ENCODE measurements at regions of chr17 and their contacts with region 1.

Region 1: GRCh38 chr17:77331301-77331864 is 190.6 kb downstream of the SEC14L1 start:
- DNase-seq: peak; percentile 90
- H3K4me3 Mint-ChIP-seq: peak overlapping the region; percentile 73
- H3K27ac Mint-ChIP-seq: peak overlapping the region; percentile 86
- H3K4me1 Mint-ChIP-seq: peaks cover 42% of the 10 kb centered on the region
- H3K27me3 Mint-ChIP-seq: peaks cover 2% of the 10 kb centered on the region

Region 2: DNA sequence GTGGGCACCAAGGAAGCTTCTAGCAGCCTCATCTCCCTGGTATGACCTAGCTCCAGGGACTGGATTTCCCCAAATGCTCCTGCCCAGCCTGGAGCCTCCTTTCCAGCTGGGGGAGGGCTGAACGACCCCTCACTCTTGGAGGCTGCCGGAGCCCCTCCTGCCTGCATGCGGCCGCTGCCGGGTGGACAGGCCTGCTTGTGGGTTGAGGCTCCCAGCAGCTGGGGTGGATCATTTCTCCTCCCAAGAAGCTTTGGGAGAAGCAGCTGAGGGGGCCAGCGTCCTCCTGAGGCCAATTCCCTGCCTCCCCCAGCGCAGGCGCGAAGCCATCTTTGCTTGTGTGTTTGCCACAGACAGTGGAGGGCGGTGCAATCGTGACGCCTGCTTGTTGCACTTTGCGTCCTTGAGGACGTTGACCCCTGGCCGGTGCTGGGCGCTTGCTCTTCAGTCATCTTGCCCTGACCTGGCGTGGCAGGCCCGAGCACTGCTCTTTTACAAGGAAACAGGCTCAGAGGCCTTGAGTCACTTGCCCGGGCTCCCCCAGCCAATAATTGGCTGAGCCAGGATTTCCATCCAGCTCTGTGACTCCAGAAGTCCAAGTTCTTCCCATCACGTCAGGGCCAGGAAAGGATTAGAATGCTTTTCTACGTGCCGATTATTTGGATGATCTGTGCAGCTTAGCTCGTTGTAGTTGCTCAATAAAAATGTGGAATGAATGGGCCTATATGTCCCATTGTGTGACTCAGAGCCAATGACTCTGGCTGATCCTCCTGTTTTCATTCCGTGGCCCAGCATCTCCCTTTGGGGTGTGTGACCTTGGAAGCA is 23.2 kb after region 1 on chr17:
- intact Hi-C with region 1: no loop called
- DNase-seq: no peak
- H3K4me3 Mint-ChIP-seq: no peak overlapping the region
- H3K27ac Mint-ChIP-seq: no peak overlapping the region
- H3K4me1 Mint-ChIP-seq: peaks cover 30% of the 10 kb centered on the region
- H3K27me3 Mint-ChIP-seq: peaks cover 9% of the 10 kb centered on the region

Region 3: GRCh38 chr17:77369544-77369971 is 38.2 kb after region 1 on chr17:
- intact Hi-C with region 1: no loop called
- DNase-seq: no peak
- H3K4me3 Mint-ChIP-seq: no peak overlapping the region
- H3K27ac Mint-ChIP-seq: no peak overlapping the region
- H3K4me1 Mint-ChIP-seq: peaks cover 51% of the 10 kb centered on the region
- H3K27me3 Mint-ChIP-seq: no peaks in the 10 kb centered on the region

Region 4: GRCh38 chr17:77391668-77392375 is 60.4 kb after region 1 on chr17:
- intact Hi-C with region 1: loop called (anchors 1 kb)
- DNase-seq: peak; percentile 61
- H3K4me3 Mint-ChIP-seq: peak overlapping the region; percentile 87
- H3K27ac Mint-ChIP-seq: peak overlapping the region; percentile 87
- H3K4me1 Mint-ChIP-seq: peaks cover 80% of the 10 kb centered on the region
- H3K27me3 Mint-ChIP-seq: no peaks in the 10 kb centered on the region

Region 5: GRCh38 chr17:77451245-77451893 is 120.0 kb after region 1 on chr17:
- intact Hi-C with region 1: loop called (anchors 5 kb)
- DNase-seq: peak; percentile 68
- H3K4me3 Mint-ChIP-seq: peak overlapping the region; percentile 95
- H3K27ac Mint-ChIP-seq: peak overlapping the region; percentile 92
- H3K4me1 Mint-ChIP-seq: peaks cover 66% of the 10 kb centered on the region
- H3K27me3 Mint-ChIP-seq: no peaks in the 10 kb centered on the region

Region 6: DNA sequence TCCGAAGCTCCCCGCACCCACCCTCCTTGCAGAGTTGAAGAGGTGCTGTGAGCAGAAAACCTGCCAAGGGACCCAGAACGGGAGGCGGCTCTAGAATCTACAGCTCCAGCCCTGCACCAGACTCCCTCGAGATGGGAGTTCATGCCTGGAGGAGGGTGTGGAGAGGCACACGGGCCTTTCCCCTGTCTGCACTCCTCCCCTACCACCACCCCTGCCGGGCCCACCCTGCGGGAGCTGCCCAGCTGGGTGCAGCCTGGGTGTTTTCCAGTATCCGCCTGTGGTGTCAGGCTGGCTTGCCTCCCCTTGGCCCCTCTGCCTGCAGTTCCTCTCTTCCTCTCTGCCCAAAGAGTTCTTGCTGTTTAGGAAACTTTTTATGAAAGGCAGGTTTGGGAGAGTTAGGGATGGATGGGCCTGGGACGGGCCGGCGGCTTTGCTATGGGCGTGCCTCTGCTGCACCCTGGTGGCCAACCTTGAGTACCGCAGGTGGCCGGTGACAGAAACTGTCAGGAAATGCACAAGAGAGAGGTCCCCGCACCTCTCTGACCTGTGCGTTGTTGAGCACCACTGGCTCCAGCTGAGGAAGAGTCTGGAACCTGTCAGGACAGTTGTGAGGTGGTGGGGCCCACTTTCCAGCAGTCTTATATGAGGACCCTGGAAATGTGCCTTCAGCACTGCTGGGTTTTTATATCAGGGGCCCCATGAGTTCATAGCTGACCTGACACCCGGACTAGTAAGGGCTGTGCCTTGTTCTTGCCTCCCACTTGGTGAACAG is 163.5 kb after region 1 on chr17:
- intact Hi-C with region 1: loop called (anchors 1 kb)
- DNase-seq: peak; percentile 61
- H3K4me3 Mint-ChIP-seq: no peak overlapping the region
- H3K27ac Mint-ChIP-seq: peak overlapping the region; percentile 8
- H3K4me1 Mint-ChIP-seq: peaks cover 18% of the 10 kb centered on the region
- H3K27me3 Mint-ChIP-seq: no peaks in the 10 kb centered on the region

Region 7: GRCh38 chr17:77881545-77881944 is 550.2 kb after region 1 on chr17:
- intact Hi-C with region 1: loop called (anchors 10 kb)
- DNase-seq: peak; percentile 82
- H3K4me3 Mint-ChIP-seq: peak overlapping the region; percentile 64
- H3K27ac Mint-ChIP-seq: peak overlapping the region; percentile 95
- H3K4me1 Mint-ChIP-seq: peaks cover 53% of the 10 kb centered on the region
- H3K27me3 Mint-ChIP-seq: peaks cover 15% of the 10 kb centered on the region